Breast epithelium (tissue), 4 donors: ENCODE measurements at regions of chr17 and their contacts with region 1.

Region 1: GRCh38 chr17:34163646-34164045 is 91.4 kb upstream of the CCL2 start:
- DNase-seq: no peak
- H3K4me3 ChIP-seq: no peak overlapping the region
- H3K27ac ChIP-seq: no peak overlapping the region
- H3K4me1 ChIP-seq: no peaks in the 10 kb centered on the region
- H3K27me3 ChIP-seq: peaks cover 0 to 44% of the 10 kb centered on the region in 2 donors
- CTCF ChIP-seq: peak in 1 of 3 donors; percentile 19
- POLR2A ChIP-seq: no peak

Region 2: DNA sequence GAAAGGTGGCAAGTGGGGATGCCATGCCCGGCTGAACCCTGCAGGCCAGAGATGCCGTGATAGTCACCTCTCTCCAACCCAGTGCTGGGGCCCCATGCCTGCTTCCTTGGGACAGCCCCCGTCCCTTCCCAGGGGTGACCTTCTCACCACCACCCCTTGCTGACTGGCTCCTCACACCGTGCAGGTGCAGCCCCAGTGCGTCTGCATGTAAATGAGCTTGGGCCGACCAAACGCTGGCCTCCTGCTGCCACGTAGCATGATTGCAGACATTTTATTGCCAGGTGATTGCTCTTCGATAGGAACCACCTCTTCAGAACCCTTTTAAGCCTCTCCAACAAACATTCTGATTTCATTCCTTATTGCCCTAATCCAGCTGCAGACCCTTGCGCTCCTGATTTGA is 903.0 kb before region 1 on chr17:
- intact Hi-C with region 1: loop called (anchors 5 kb)
- DNase-seq: no peak
- H3K4me3 ChIP-seq: no peak overlapping the region
- H3K27ac ChIP-seq: no peak overlapping the region
- H3K4me1 ChIP-seq: no peaks in the 10 kb centered on the region
- H3K27me3 ChIP-seq: no peaks in the 10 kb centered on the region
- CTCF ChIP-seq: no peak
- POLR2A ChIP-seq: no peak

Region 3: GRCh38 chr17:33949100-33949499 is 214.5 kb before region 1 on chr17:
- intact Hi-C with region 1: no loop called
- DNase-seq: no peak
- H3K4me3 ChIP-seq: no peak overlapping the region
- H3K27ac ChIP-seq: no peak overlapping the region
- H3K4me1 ChIP-seq: no peaks in the 10 kb centered on the region
- H3K27me3 ChIP-seq: peaks cover 0 to 18% of the 10 kb centered on the region in 2 donors
- CTCF ChIP-seq: no peak
- POLR2A ChIP-seq: no peak

Region 4: DNA sequence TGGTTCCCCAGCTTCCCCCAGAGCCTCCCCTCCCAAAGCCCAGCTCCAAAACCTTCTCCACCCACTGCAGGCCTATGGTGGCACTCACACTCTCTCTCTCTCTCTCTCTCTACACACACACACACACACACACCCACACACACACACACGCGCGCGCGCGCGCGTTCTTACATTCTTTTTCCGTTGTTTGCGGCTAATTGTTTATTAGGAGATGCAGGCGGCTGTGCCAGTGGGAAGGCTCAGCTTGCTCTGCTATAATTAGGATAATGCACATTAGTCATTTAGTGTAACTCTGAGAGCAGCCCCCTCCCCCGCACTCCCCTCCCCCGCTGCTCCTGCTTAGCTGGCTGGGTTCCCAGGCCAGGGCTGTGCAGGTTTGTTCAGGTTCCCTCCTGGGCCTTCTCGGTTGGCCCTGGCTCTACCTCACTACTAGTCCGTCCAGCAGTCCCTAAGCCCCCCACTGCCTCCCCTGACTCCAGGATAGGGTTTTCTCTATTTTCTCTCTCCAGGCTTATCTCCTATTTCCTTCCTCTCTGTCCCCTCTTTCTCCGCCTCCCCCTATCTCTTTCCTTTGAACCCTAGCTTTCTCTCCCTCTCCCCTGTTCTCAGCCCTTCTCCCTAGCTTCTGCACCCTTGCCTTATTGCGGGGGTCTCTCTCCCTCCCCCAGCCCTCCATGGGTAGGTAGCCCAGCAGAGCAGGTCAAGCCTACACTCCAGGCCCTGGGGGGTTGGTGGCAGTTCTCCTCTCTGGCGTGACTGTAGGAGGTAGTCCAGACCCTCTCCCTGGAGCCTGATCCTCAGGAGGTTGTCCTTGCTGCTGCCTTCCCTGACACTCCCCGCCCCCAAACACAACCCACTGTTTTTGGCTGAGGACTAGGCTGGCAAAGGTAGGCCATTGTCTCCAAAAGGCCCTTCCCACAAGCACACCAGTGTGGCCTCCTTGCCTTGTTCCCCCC is 449.7 kb after region 1 on chr17:
- intact Hi-C with region 1: loop called (anchors 10 kb)
- DNase-seq: peak in 1 of 2 donors; percentile 29
- H3K4me3 ChIP-seq: peak overlapping the region in 1 of 3 donors; percentile 5
- H3K27ac ChIP-seq: no peak overlapping the region
- H3K4me1 ChIP-seq: no peaks in the 10 kb centered on the region
- H3K27me3 ChIP-seq: peaks cover 0 to 9% of the 10 kb centered on the region in 2 donors
- CTCF ChIP-seq: no peak
- POLR2A ChIP-seq: no peak